ENCODE measurements at regions of chr1 and their contacts with region 1.

Region 1: GRCh38 chr1:41749992-41750745 is 168.6 kb downstream of the HIVEP3 start:
- DNase-seq: no peak
- H3K4me3 ChIP-seq: no peak overlapping the region
- H3K27ac ChIP-seq: no peak overlapping the region
- H3K27me3 ChIP-seq: no peaks in the 10 kb centered on the region
- CTCF ChIP-seq: no peak

Region 2: DNA sequence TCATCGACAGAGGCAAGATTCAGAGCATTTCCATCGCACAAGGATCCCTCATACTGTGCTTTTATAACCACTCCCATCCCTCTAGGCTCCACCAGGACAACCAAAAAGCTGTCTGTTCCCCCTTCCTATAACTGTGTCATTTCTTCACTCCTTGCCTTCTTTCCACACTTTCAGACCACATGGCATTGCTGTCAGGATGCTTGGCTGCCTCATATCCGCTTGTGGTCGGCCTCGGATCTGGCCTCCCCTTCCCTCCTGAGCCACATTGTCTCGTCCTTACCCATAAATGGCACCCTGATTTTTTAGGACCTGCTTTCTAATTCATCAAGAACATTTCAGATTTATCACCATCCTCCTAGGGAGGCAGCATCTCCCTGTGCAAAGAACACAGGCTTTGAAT is 88.1 kb after region 1 on chr1:
- CTCF ChIA-PET with region 1: no interaction called
- POLR2A ChIA-PET with region 1: interaction called, 11 read pairs
- DNase-seq: no peak
- H3K4me3 ChIP-seq: no peak overlapping the region
- H3K27ac ChIP-seq: no peak overlapping the region
- H3K27me3 ChIP-seq: no peaks in the 10 kb centered on the region
- CTCF ChIP-seq: no peak

Measured in AG04450 (cell line).